ENCODE measurements at regions of chr16 and their contacts with region 1.

Region 1: DNA sequence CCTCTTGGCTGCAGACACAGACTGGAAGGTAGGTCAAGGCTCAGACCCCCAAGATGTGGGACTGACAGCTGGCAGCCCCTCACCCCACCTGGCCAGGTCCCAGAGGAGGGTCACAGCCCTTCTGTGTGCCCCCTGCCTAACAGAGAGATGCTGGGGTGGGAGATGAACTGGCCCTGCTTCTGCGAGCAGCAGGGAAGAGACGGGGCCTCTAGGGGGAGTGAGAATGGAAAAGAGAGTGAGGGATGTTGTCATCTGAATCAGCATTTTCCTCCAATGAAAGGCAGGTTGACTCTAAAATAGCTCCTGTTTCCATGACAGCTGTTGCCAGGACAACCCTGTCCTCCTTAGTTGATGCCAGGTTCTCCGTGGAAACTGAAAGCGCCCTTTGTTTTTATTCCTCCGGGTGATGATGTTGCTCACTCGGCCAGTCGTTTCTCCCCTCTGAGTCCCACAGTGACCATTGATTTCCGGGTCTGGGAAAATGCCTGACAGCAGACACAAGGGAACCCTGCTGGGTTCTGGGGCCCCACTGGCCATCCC is 4.9 kb upstream of the NDRG4 start:
- DNase-seq: peak; percentile 42 to 80 (median 59)
- H3K4me3 ChIP-seq: no peak overlapping the region
- H3K27ac ChIP-seq: no peak overlapping the region
- H3K4me1 ChIP-seq: peaks cover 2% of the 10 kb centered on the region
- H3K27me3 ChIP-seq: no peaks in the 10 kb centered on the region
- CTCF ChIP-seq: no peak
- EP300 ChIP-seq: no peak
- POLR2A ChIP-seq: no peak

Region 2: GRCh38 chr16:57564571-57565270 is 930.3 kb before region 1 on chr16:
- intact Hi-C with region 1: loop called in 1 of 4 experiments (anchors 10 kb)
- DNase-seq: no peak
- H3K4me3 ChIP-seq: no peak overlapping the region
- H3K27ac ChIP-seq: no peak overlapping the region
- H3K4me1 ChIP-seq: no peaks in the 10 kb centered on the region
- H3K27me3 ChIP-seq: no peaks in the 10 kb centered on the region
- CTCF ChIP-seq: no peak
- EP300 ChIP-seq: no peak
- POLR2A ChIP-seq: no peak